IMR-90 (cell line): ENCODE measurements at regions of chr1 and their contacts with region 1.

Region 1: GRCh38 chr1:110495926-110496600 is 22.9 kb downstream of the KCNA10 start:
- DNase-seq: peak; percentile 71
- ATAC-seq: peak; percentile 96
- H3K4me3 ChIP-seq: no peak overlapping the region
- H3K27ac ChIP-seq: no peak overlapping the region
- H3K4me1 ChIP-seq: no peaks in the 10 kb centered on the region
- H3K27me3 ChIP-seq: peaks cover 22% of the 10 kb centered on the region
- CTCF ChIP-seq: peak; percentile 99; the same call in 1 of the 2 replicates
- POLR2A ChIP-seq: no peak
- RAD21 ChIP-seq: peak; percentile 100

Region 2: DNA sequence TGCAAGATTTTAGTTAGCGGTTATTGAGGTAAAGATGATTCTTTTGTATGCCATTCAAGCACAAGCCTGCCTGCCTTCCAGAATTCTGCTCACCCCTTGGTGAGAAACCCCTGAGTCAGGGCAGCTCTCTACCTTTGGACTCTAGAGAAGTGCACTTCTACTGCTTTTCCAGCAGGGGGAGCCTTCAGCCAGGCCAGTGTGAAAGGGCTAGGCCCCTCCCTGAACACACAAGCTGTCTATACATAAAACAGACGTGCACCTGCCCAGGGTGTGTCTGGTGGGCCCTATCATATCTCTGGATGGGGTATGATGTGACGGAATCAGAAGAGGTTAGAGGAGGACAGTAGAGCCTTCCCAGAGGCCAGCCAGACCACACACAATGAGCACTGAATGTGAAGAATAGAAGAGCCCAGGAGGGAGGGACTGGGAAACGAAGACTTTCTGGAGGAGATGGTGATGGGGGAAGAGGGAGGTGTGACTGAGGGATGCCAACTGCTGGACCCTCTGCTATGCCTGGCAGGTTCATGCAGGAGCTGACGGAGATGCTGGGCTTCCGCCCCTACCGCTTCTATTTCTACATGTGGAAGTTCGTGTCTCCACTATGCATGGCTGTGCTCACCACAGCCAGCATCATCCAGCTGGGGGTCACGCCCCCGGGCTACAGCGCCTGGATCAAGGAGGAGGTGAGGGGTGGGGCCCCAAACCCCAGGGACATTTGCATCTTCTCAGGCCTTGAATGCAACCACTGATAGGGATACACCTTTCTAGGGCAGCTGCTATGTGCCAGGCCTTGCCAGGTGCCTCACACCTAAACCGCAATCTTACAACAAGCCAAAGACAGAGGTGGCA is 298.9 kb before region 1 on chr1:
- CTCF ChIA-PET with region 1: interaction called, 31 read pairs
- POLR2A ChIA-PET with region 1: no interaction called
- dilution Hi-C with region 1: no loop called
- in situ Hi-C with region 1: no loop called
- intact Hi-C with region 1: loop called (anchors 1 kb)
- DNase-seq: peak; percentile 41
- ATAC-seq: peak; percentile 97
- H3K4me3 ChIP-seq: no peak overlapping the region
- H3K27ac ChIP-seq: no peak overlapping the region
- H3K4me1 ChIP-seq: 0 out of 2 replicates have a peak, but pooled peaks cover 1% of the 10 kb centered on the region
- H3K27me3 ChIP-seq: peaks cover 9% of the 10 kb centered on the region
- CTCF ChIP-seq: peak; percentile 81
- POLR2A ChIP-seq: no peak
- RAD21 ChIP-seq: peak; percentile 70

Region 3: DNA sequence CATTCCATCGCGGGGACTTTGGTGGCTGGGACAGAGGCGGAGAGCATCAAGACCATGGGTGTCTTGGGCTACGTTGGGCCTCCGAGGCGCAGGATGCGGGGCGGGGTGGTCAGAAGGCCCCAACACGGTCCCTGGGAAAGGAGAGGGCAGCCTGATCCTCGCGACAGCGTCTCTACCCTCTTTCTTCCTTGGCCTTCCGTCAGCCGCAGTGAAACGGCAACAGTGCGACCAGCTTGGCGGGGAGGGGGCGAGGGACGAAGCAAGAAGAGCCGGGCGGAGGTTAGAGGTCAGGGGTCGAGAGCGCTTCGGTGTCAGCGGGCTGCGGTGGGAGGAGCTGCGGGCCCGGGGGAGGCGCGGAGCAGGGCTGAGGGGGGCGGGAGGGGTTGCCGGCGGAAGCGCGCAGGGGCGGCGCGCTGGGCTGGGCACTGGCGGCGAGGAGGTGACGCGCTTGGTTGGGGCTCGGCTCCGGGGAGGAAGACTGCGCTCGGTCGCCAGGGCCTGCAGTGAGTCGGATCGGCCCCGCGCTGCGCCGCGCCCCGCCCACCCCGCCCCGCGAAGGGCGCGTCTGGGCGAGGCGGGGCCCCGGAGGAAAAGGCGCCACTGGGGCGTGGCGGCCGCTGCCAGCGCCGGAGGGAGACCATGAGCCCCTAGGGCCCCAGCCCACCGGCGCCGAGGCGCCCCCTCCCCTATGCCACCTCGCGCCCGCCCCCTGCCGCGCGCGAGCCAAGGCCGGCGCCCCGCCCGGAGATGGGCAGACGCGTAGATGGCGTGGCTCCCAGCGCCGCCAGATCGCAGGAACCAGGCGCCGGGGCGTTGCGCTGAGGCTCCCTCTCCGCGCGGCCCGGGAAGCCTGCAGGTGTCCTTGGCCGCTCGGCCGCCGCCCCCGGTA is 286.1 kb before region 1 on chr1 and contains the start of gene KCNC4:
- CTCF ChIA-PET with region 1: interaction called, 27 read pairs
- POLR2A ChIA-PET with region 1: no interaction called
- dilution Hi-C with region 1: no loop called
- in situ Hi-C with region 1: no loop called
- intact Hi-C with region 1: loop called (anchors 1 kb)
- DNase-seq: peak; percentile 58
- ATAC-seq: peak; percentile 84
- H3K4me3 ChIP-seq: peak within 1 kb of the TSS; percentile 49
- H3K27ac ChIP-seq: peak within 1 kb of the TSS; percentile 22; the same call in 1 of the 2 replicates
- H3K4me1 ChIP-seq: no peaks in the 10 kb centered on the region
- H3K27me3 ChIP-seq: peaks cover 51% of the 10 kb centered on the region
- CTCF ChIP-seq: no peak
- POLR2A ChIP-seq: no peak
- RAD21 ChIP-seq: no peak
- total RNA-seq, gene KCNC4: 0.18 and 0.28 TPM in 2 replicates

Region 4: GRCh38 chr1:110412576-110412975 is 83.5 kb before region 1 on chr1:
- CTCF ChIA-PET with region 1: interaction called, 12 read pairs
- POLR2A ChIA-PET with region 1: no interaction called
- dilution Hi-C with region 1: no loop called
- in situ Hi-C with region 1: loop called (anchors 10 kb)
- intact Hi-C with region 1: loop called (anchors 1 kb)
- DNase-seq: peak; percentile 63
- ATAC-seq: peak; percentile 84
- H3K4me3 ChIP-seq: no peak overlapping the region
- H3K27ac ChIP-seq: no peak overlapping the region
- H3K4me1 ChIP-seq: peaks cover 2% of the 10 kb centered on the region; the same call in 1 of the 2 replicates
- H3K27me3 ChIP-seq: peaks cover 14% of the 10 kb centered on the region
- CTCF ChIP-seq: peak; percentile 75
- POLR2A ChIP-seq: no peak
- RAD21 ChIP-seq: peak; percentile 79

Region 5: DNA sequence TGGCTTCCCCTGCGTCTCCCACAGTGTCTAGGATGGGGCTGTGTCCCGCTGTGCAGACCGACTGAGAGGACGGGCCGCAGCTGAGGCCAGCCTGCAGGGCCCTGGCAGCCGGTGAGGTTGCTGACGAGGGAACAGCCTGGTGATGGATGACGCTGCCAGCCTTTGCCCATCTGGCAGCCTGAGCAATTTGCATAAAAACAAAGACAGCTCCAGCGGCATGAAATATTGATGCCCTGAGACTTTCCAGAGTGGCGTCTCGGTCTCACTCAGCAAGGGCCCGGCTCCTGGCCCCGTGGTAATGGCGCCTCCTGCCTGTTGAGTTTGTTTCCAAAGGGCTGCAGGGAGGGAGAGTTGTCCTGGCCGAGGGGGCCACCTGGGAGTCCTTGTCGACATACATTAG is 42.0 kb after region 1 on chr1:
- CTCF ChIA-PET with region 1: no interaction called
- POLR2A ChIA-PET with region 1: no interaction called
- dilution Hi-C with region 1: no loop called
- in situ Hi-C with region 1: no loop called
- intact Hi-C with region 1: no loop called
- DNase-seq: no peak
- ATAC-seq: no peak
- H3K4me3 ChIP-seq: no peak overlapping the region
- H3K27ac ChIP-seq: no peak overlapping the region
- H3K4me1 ChIP-seq: no peaks in the 10 kb centered on the region
- H3K27me3 ChIP-seq: peaks cover 10% of the 10 kb centered on the region; the same call in 1 of the 2 replicates
- CTCF ChIP-seq: no peak
- POLR2A ChIP-seq: no peak
- RAD21 ChIP-seq: no peak

Region 6: DNA sequence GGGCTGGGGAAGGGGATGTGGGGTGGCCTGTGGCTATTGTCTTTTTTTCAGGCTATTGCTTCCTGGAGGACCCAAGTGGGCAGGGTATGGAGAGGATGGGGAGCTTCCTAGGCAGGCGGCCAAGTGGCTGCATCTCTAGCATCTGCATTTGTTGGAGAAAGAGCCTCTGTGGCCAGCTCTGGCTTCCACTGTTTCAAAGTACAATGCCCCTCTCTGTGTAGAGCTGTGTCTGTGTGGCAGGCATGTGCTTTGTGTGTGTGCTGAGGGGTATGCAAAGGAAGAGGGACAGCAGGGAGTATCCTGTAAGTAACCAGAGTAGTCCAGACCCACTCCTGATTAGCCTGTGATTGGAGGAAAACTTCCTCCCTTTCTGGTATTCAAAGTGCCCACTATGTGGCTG is 69.5 kb after region 1 on chr1:
- CTCF ChIA-PET with region 1: no interaction called
- POLR2A ChIA-PET with region 1: no interaction called
- dilution Hi-C with region 1: no loop called
- in situ Hi-C with region 1: no loop called
- intact Hi-C with region 1: no loop called
- DNase-seq: no peak
- ATAC-seq: no peak
- H3K4me3 ChIP-seq: no peak overlapping the region
- H3K27ac ChIP-seq: no peak overlapping the region
- H3K4me1 ChIP-seq: no peaks in the 10 kb centered on the region
- H3K27me3 ChIP-seq: peaks cover 4% of the 10 kb centered on the region
- CTCF ChIP-seq: no peak
- POLR2A ChIP-seq: no peak
- RAD21 ChIP-seq: no peak